ENCODE measurements at regions of chr3 and their contacts with region 1.

Region 1: GRCh38 chr3:160027541-160028195 is 39.0 kb downstream of the IL12A start:
- DNase-seq: peak; percentile 21
- H3K4me3 Mint-ChIP-seq: peak overlapping the region; percentile 25
- H3K27ac Mint-ChIP-seq: peak overlapping the region; percentile 92
- H3K4me1 Mint-ChIP-seq: peaks cover 39% of the 10 kb centered on the region
- H3K27me3 Mint-ChIP-seq: no peaks in the 10 kb centered on the region

Region 2: DNA sequence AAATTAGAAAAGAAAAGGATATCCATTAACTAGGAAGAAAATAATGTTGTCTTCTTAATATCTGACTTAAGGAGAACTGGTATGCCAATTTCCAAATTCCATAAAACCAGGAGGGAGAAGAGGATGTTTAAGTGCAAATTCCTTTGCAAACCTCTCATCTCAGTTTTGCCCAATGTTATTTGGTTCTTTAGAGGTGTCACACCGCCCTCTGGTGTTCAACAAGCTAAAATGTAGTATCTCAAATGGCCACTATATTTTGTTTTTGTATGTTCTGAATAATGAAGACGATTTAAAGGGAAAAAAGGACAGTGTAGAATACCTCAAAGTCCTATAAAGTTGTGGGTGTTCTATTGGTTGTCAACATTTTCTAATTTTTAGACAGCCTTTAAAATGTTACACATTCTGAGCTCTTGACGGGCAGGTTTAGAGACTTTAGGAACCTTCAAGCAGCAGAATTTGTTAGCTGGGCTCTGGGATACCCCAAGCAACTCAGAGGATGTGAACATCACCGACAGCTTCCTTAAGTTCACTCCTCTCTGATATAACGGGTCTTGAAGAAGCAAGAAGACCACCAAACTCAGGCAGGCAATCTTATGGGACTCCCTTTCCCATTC is 767.5 kb before region 1 on chr3:
- intact Hi-C with region 1: loop called (anchors 10 kb)
- DNase-seq: peak; percentile 2
- H3K4me3 Mint-ChIP-seq: no peak overlapping the region
- H3K27ac Mint-ChIP-seq: no peak overlapping the region
- H3K4me1 Mint-ChIP-seq: no peaks in the 10 kb centered on the region
- H3K27me3 Mint-ChIP-seq: peaks cover 4% of the 10 kb centered on the region

Region 3: GRCh38 chr3:160210799-160211221 is 183.1 kb after region 1 on chr3:
- intact Hi-C with region 1: loop called (anchors 1 kb)
- DNase-seq: no peak
- H3K4me3 Mint-ChIP-seq: no peak overlapping the region
- H3K27ac Mint-ChIP-seq: no peak overlapping the region
- H3K4me1 Mint-ChIP-seq: no peaks in the 10 kb centered on the region
- H3K27me3 Mint-ChIP-seq: peaks cover 10% of the 10 kb centered on the region

Region 4: DNA sequence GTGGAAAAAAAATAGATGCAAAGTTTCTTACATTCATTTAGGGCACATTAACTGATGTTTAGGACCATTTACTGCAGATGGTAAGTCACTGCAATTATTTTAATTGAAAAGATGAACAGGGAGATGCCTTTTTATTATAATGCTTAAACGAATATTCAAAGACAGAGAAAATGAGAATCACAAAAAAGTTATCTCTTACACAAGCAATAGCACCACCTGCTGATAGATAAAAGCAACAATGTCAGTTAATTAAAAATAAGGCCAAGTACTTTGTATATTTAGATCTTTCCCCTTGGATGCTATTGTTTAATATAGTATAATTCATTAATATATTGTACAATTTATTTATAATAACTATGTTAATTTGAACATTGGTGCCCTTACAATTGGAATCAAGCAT is 315.5 kb after region 1 on chr3:
- intact Hi-C with region 1: loop called (anchors 1 kb)
- DNase-seq: no peak
- H3K4me3 Mint-ChIP-seq: no peak overlapping the region
- H3K27ac Mint-ChIP-seq: no peak overlapping the region
- H3K4me1 Mint-ChIP-seq: no peaks in the 10 kb centered on the region
- H3K27me3 Mint-ChIP-seq: no peaks in the 10 kb centered on the region

Region 5: GRCh38 chr3:160413613-160414248 is 386.1 kb after region 1 on chr3:
- intact Hi-C with region 1: loop called (anchors 1 kb)
- DNase-seq: peak; percentile 58
- H3K4me3 Mint-ChIP-seq: no peak overlapping the region
- H3K27ac Mint-ChIP-seq: no peak overlapping the region
- H3K4me1 Mint-ChIP-seq: peaks cover 49% of the 10 kb centered on the region
- H3K27me3 Mint-ChIP-seq: no peaks in the 10 kb centered on the region

Region 6: GRCh38 chr3:160565442-160566403 is 538.1 kb after region 1 on chr3 and contains the start of gene KPNA4:
- intact Hi-C with region 1: loop called (anchors 10 kb)
- DNase-seq: peak; percentile 96
- H3K4me3 Mint-ChIP-seq: peak within 1 kb of the TSS; percentile 97
- H3K27ac Mint-ChIP-seq: peak within 1 kb of the TSS; percentile 96
- H3K4me1 Mint-ChIP-seq: peaks cover 58% of the 10 kb centered on the region
- H3K27me3 Mint-ChIP-seq: no peaks in the 10 kb centered on the region
- total RNA-seq, gene KPNA4: 73.5 and 77.7 TPM in 2 replicates

Measured in activated T-helper 1 cell treated with anti-CD3 and anti-CD28 coated beads, Interleukin-12 subunit alpha, Interleukin-12 subunit beta, Interleukin-2, Interleukin-4 antibody, amounts not matched to agents 30 ng/mL and 10 ng/mL and 1 ng/mL, durations not matched to agents 14 hours and 24 hours and 36 hours (primary cell).